Activated CD8-positive, alpha-beta memory T cell treated with anti-CD3 and anti-CD28 coated beads, Interleukin-2, amount 10 ng/mL, durations not matched to agents 7 days and 5 days (primary cell): ENCODE measurements at regions of chr11 and their contacts with region 1.

Region 1: GRCh38 chr11:64204464-64204989 is 2.0 kb upstream of the FERMT3 start:
- DNase-seq: peak; percentile 86
- ATAC-seq: peak; percentile 30
- H3K4me3 Mint-ChIP-seq: peak overlapping the region; percentile 45
- H3K27ac Mint-ChIP-seq: peak overlapping the region; percentile 78
- H3K4me1 Mint-ChIP-seq: peaks cover 45% of the 10 kb centered on the region
- H3K27me3 Mint-ChIP-seq: no peaks in the 10 kb centered on the region

Region 2: DNA sequence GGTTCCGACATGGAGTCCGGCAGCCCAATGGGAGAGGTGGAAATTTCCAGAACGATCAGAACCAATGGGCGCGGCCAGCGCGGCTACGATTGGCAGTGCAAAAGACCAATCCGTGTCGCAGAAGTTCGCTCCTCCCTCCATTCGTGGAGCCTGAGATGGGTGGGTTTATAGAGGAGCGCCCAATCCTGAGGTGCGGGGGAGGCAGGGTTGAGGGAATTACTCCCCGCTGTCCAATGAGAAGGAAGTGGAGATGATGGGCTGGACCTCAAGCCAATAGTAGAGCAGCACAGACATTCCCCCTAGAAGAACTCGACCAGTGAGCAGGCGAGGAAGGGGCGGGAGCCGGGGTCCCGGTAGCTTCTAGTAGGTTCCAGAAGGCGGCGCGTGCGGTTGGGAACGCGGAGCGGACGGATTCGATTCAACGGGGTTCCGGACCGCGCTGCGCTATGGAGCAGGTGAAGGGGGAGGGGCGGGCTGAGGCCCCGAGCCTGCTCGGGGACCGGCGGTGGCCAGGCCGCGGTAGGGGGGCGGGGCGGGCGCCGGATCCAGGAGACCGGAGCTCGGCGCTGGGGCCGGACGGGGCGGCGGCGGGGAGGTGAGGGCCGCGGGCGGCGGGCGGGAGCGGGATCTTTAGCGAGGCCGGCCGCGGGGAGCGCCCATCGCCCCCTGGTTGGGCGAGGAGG is 18.6 kb before region 1 on chr11 and contains the start of gene STIP1:
- CTCF ChIA-PET with region 1: interaction called, 126 read pairs
- DNase-seq: peak; percentile 100
- ATAC-seq: peak; percentile 93
- H3K4me3 Mint-ChIP-seq: no peak within 1 kb of the TSS
- H3K27ac Mint-ChIP-seq: peak within 1 kb of the TSS; percentile 96
- H3K4me1 Mint-ChIP-seq: peaks cover 52% of the 10 kb centered on the region
- H3K27me3 Mint-ChIP-seq: no peaks in the 10 kb centered on the region
- total RNA-seq, gene STIP1: 303 to 410 TPM

Region 3: DNA sequence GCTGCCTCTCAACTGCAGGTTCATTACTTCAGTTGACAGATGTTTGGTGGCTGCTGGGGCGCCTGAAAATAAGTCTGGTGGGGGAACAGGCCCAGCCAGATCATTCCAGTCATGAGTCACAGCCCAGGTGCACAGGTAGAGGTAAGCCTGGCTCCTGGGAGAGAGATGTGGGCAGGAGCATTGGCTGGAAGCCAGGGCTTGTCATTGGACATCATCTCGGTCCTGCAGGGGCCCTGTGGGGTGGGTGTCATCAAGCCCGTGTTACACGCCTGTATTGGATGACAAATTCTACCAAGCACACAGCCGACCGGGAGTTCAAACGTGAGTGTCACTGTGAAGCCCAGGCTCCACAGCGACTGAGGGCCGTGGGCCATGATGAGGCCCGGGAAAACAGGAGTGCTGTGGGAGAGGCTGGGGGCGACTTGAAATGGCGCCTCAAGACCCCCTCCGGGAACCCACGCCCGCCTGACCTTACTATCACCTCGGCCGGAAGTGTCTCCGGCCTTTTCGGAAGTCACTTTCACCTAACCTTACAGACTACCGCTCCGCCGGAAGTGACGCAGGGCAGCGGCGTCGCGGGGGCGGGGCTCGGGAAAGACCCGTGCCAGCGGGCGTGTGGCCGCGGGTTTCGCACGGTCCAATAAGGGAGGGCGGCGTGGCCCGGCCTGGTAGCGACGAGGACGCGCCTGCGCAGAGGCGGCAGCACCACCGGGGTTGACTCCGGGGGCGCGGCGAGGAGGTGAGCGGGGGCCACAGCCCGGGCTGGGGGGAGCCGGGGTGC is 36.1 kb after region 1 on chr11 and contains the start of gene FKBP2:
- CTCF ChIA-PET with region 1: interaction called, 16 read pairs
- DNase-seq: peak; percentile 98
- ATAC-seq: peak; percentile 75
- H3K4me3 Mint-ChIP-seq: peak within 1 kb of the TSS; percentile 83
- H3K27ac Mint-ChIP-seq: peak within 1 kb of the TSS; percentile 95
- H3K4me1 Mint-ChIP-seq: peaks cover 47% of the 10 kb centered on the region
- H3K27me3 Mint-ChIP-seq: no peaks in the 10 kb centered on the region
- total RNA-seq, gene FKBP2: 23.4 to 23.9 TPM

Region 4: DNA sequence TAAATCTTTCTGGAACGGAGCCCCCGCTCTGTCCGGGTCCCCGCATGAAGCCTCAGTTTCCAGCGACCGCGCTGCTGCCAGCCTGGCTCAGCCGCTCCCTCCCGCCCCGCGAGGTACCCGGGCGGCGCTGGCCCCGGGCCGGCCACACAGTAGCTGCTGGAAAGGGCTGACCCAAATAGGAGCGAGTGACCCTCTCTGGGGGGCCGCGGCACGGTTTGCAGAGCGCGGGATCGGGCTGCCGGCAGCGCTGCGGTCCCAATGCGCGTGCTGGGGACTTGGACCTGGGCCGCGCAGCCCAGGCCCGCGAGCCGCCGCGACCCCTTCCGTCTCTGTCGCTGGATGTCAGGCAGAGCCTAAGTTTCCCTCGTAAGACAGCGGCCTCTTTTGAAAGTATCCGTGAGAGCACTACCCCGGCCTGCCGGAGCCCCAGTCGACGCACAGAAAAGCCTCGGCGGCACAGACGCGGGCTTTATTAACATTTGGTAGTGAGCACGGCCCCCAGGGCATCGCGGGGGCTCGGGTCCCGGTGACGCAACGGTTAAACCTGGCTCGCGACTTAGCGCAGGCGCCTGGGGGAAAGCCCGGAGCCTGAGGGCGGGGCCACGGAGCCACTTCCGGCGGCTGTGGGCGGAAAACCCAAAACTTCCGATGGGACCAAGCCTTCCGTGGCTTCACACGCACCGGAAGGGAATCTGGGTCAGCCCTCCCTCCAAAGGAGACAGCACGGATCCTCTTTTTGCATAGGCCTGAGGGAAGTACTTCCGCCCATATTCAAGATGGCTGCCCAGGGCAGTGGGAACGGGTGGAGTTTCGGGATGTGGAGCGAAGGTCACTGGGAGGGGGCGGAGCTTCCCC is 65.1 kb after region 1 on chr11:
- CTCF ChIA-PET with region 1: interaction called, 13 read pairs
- DNase-seq: peak; percentile 98
- ATAC-seq: peak; percentile 71
- H3K4me3 Mint-ChIP-seq: peak overlapping the region; percentile 89
- H3K27ac Mint-ChIP-seq: peak overlapping the region; percentile 96
- H3K4me1 Mint-ChIP-seq: peaks cover 31% of the 10 kb centered on the region
- H3K27me3 Mint-ChIP-seq: no peaks in the 10 kb centered on the region

Region 5: DNA sequence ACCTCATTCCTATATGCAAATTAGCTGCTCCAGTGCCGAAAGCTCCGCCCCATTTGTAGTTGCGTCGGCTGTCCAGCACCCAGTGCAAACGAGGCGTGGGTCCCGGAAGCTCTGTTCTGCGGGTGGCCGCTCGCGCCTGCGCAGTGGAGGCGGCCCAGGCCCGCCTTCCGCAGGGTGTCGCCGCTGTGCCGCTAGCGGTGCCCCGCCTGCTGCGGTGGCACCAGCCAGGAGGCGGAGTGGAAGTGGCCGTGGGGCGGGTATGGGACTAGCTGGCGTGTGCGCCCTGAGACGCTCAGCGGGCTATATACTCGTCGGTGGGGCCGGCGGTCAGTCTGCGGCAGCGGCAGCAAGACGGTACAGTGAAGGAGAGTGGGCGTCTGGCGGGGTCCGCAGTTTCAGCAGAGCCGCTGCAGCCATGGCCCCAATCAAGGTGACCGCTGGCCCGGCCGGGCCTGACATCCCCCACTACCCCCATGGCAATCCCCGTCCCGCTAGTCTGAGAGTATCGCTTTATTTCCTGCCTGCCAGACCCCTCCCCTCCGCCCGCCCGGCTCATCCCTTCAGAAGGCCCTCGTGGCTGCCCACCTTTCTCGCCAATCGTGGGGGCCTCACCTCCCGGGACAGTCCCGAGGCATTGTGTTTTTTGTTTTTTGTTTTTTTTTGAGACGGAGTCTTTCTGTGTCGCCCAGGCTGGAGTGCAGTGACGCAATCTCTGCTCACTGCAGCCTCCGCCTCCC is 113.6 kb after region 1 on chr11 and contains the start of gene PRDX5:
- CTCF ChIA-PET with region 1: interaction called, 27 read pairs
- DNase-seq: peak; percentile 97
- ATAC-seq: peak; percentile 84
- H3K4me3 Mint-ChIP-seq: peak within 1 kb of the TSS; percentile 95
- H3K27ac Mint-ChIP-seq: peak within 1 kb of the TSS; percentile 100
- H3K4me1 Mint-ChIP-seq: peaks cover 40% of the 10 kb centered on the region
- H3K27me3 Mint-ChIP-seq: no peaks in the 10 kb centered on the region
- total RNA-seq, gene PRDX5: 125 to 163 TPM